HEK293 (cell line): ENCODE measurements at regions of chr7 and their contacts with region 1.

Region 1: DNA sequence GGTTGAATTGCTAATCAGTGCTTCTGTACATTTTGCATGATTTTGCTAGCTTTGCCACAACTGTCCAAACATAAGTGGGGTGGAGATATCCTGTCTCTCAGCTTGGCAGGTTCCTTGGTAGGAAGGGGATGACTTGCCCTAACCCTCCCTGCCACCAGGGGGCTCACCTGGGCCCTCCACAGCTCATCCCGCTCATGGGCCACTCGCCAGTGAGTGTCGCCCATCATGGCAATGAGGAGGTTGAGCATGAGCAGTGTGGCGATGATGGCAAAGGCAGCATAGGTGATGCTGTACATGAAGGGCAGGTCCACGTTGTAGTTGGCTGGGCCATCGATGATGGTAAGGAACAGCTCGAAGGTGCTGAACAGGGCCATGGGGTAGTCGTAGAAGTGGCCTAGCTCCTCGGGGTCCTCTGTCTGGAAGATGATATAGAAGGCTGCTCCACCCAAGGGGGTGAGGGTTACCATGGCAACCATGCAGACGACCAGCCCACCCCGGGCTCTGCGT is 12.2 kb downstream of the TRPV6 start:
- H3K4me3 ChIP-seq: no peak overlapping the region
- H3K27ac ChIP-seq: no peak overlapping the region
- H3K4me1 ChIP-seq: no peaks in the 10 kb centered on the region
- CTCF ChIP-seq: peak; percentile 85

Region 2: DNA sequence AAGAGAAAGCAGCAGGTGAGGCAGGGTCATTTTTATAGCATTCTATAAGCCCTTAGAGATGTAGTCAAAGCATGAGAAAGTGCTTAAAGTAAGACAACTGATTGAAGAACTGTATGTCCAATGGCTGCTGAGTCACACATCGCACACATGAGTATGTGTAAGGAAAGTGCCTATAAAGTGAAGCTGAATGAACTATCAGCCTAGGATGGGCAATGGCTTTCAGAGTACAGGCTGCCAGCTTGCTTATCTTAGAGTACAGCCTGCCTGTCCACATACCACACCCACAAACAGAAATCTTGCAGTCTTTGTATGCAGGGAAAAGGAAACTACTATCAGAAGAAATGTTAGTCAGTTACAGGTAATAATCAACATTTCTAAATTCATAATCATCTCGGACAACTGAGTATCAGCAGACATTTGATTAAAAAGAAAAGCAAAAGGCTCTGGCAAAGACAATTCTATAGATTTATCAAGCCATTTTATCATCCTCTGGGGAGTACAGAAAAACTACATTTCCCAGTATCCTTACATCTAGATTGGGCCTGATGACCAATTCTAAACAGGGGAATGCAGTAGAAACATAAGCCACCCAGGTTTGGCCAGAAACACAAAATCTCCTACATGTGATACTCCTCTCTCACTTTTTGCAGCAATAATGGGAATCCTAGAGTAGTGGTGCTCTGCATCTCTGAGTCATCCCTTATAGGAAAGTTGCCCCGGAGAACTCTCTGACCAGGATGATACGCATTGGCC is 34.7 kb before region 1 on chr7:
- CTCF ChIA-PET with region 1: no interaction called
- POLR2A ChIA-PET with region 1: no interaction called
- H3K4me3 ChIP-seq: no peak overlapping the region
- H3K27ac ChIP-seq: no peak overlapping the region
- H3K4me1 ChIP-seq: no peaks in the 10 kb centered on the region
- CTCF ChIP-seq: no peak

Region 3: GRCh38 chr7:142853739-142854371 is 19.5 kb before region 1 on chr7:
- CTCF ChIA-PET with region 1: interaction called, 24 read pairs
- POLR2A ChIA-PET with region 1: no interaction called
- H3K4me3 ChIP-seq: peak overlapping the region; percentile 51
- H3K27ac ChIP-seq: no peak overlapping the region; the same call in 1 of the 2 replicates
- H3K4me1 ChIP-seq: no peaks in the 10 kb centered on the region
- CTCF ChIP-seq: peak; percentile 67

Region 4: GRCh38 chr7:142859829-142860228 is 13.5 kb before region 1 on chr7:
- CTCF ChIA-PET with region 1: interaction called, 24 read pairs
- POLR2A ChIA-PET with region 1: no interaction called
- H3K4me3 ChIP-seq: no peak overlapping the region
- H3K27ac ChIP-seq: no peak overlapping the region
- H3K4me1 ChIP-seq: no peaks in the 10 kb centered on the region
- CTCF ChIP-seq: no peak

Region 5: DNA sequence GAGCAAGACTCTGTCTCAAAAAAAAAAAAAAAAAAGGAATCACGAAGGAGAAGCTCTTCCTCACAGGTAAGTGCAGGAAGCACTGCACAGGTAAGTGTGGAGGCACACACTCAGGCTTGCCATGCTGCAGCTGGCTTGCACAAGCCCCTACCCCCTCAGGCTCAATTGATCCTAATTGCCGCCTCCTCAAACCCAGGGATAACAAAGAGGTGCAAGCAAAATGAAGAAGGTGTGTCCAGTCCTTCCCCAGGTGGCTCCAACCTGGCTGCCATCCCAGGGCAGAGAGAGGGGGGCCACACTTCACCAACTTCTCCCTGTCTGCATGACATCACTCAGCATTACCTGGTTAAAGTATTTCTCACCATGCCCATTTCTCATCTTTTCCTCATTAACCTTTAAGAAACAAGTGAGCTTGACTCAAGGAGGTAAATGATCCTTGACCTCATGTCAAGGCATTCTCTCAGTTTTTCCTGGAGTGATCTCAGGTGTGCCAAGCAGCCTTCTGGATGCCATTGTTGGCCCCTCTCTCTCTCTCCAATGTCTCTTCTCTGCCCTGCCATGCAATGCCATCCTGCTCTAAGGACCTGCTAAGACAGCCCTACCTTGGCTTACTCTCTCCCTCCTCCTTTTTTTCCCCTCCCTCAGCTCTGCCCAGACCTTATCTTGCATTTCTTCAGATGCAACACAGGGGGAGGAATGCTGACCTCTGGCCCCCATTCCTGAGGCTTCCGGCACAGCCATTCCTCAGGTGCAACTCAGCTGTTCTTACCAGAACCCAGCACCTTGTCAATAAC is 25.2 kb after region 1 on chr7:
- CTCF ChIA-PET with region 1: interaction called, 12 read pairs
- POLR2A ChIA-PET with region 1: interaction called, 4 read pairs
- H3K4me3 ChIP-seq: no peak overlapping the region
- H3K27ac ChIP-seq: no peak overlapping the region
- H3K4me1 ChIP-seq: no peaks in the 10 kb centered on the region
- CTCF ChIP-seq: no peak

Region 6: DNA sequence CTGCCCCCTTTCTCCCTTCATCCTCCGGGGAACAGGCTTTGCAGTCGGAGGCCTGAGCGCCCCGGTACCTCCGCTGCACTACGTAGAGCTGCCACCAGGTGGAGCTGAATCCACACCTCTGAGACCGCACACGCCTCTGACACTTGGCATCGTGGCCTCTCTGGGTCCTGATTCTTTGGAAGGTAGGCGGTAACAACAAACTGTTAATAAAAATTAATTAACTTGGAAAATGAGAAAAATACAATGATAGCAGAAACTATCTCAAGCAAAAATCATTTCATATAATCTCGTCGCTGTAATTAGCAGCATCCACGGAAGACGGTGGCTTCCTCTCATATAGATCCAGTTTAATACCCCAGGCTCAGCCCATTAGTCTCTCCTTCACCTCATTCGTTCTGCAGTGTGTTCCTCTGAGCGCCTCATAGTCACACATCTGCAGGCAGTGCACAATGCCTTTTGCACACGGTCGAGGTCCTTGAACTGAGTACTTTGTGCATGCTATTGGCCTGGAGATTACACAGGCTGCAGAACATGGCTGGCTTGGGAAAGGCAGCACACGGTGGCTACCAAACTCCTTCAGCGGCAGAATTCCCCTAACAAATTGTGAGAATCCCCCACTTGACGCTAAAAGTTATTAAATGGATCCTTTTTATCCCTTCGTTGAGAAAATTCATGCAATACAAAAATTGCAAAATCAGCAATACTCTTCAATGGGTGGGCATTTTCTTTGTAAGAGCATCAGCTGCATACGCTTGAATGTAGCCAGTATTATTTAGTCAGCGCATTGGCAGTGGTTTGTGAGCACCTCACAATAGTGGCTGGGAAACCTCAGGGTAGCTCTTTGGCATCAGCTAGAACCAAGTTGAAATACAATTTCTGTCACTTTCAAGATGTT is 134.9 kb after region 1 on chr7:
- CTCF ChIA-PET with region 1: interaction called, 75 read pairs
- POLR2A ChIA-PET with region 1: no interaction called
- H3K4me3 ChIP-seq: no peak overlapping the region
- H3K27ac ChIP-seq: no peak overlapping the region
- H3K4me1 ChIP-seq: no peaks in the 10 kb centered on the region
- CTCF ChIP-seq: no peak